Mammary epithelial cell (primary cell): ENCODE measurements at regions of chr6 and their contacts with region 1.

Region 1: GRCh38 chr6:29834564-29835436 is 7.2 kb downstream of the HLA-G start:
- DNase-seq: peak; percentile 17
- H3K4me3 ChIP-seq: no peak overlapping the region
- H3K27ac ChIP-seq: no peak overlapping the region
- H3K4me1 ChIP-seq: no peaks in the 10 kb centered on the region
- H3K27me3 ChIP-seq: no peaks in the 10 kb centered on the region
- CTCF ChIP-seq: peak; percentile 72 to 87

Region 2: GRCh38 chr6:29641430-29642148 is 193.2 kb before region 1 on chr6:
- CTCF ChIA-PET with region 1: no interaction called
- dilution Hi-C with region 1: loop called (anchors 5 kb)
- in situ Hi-C with region 1: loop called in 1 of 2 experiments (anchors 10 kb)
- intact Hi-C with region 1: no loop called
- DNase-seq: peak; percentile 27
- H3K4me3 ChIP-seq: no peak overlapping the region
- H3K27ac ChIP-seq: no peak overlapping the region
- H3K4me1 ChIP-seq: peaks cover 3% of the 10 kb centered on the region
- H3K27me3 ChIP-seq: no peaks in the 10 kb centered on the region
- CTCF ChIP-seq: no peak

Region 3: GRCh38 chr6:29649701-29650673 is 184.8 kb before region 1 on chr6:
- CTCF ChIA-PET with region 1: interaction called, 3 read pairs
- dilution Hi-C with region 1: no loop called
- in situ Hi-C with region 1: loop called in 1 of 2 experiments (anchors 10 kb)
- intact Hi-C with region 1: loop called (anchors 2 kb)
- DNase-seq: peak; percentile 96
- H3K4me3 ChIP-seq: peak overlapping the region; percentile 57 to 60 (median 59)
- H3K27ac ChIP-seq: peak overlapping the region; percentile 68
- H3K4me1 ChIP-seq: peaks cover 6% of the 10 kb centered on the region
- H3K27me3 ChIP-seq: no peaks in the 10 kb centered on the region
- CTCF ChIP-seq: peak; percentile 93 to 98

Region 4: GRCh38 chr6:29705389-29706231 is 129.2 kb before region 1 on chr6:
- CTCF ChIA-PET with region 1: no interaction called
- dilution Hi-C with region 1: no loop called
- in situ Hi-C with region 1: loop called in 1 of 2 experiments (anchors 10 kb)
- intact Hi-C with region 1: loop called (anchors 1 kb)
- DNase-seq: peak; percentile 32
- H3K4me3 ChIP-seq: no peak overlapping the region
- H3K27ac ChIP-seq: no peak overlapping the region
- H3K4me1 ChIP-seq: no peaks in the 10 kb centered on the region
- H3K27me3 ChIP-seq: no peaks in the 10 kb centered on the region
- CTCF ChIP-seq: peak; percentile 41 to 53

Region 5: GRCh38 chr6:29724937-29725869 is 109.6 kb before region 1 on chr6:
- CTCF ChIA-PET with region 1: no interaction called
- dilution Hi-C with region 1: loop called (anchors 5 kb)
- in situ Hi-C with region 1: no loop called
- intact Hi-C with region 1: no loop called
- DNase-seq: no peak
- H3K4me3 ChIP-seq: no peak overlapping the region
- H3K27ac ChIP-seq: no peak overlapping the region
- H3K4me1 ChIP-seq: no peaks in the 10 kb centered on the region
- H3K27me3 ChIP-seq: no peaks in the 10 kb centered on the region
- CTCF ChIP-seq: no peak

Region 6: GRCh38 chr6:29737707-29738630 is 96.8 kb before region 1 on chr6:
- CTCF ChIA-PET with region 1: no interaction called
- dilution Hi-C with region 1: no loop called
- in situ Hi-C with region 1: loop called (anchors 5 to 10 kb)
- intact Hi-C with region 1: loop called (anchors 1 kb)
- DNase-seq: peak; percentile 74
- H3K4me3 ChIP-seq: no peak overlapping the region
- H3K27ac ChIP-seq: no peak overlapping the region
- H3K4me1 ChIP-seq: peaks cover 14% of the 10 kb centered on the region
- H3K27me3 ChIP-seq: no peaks in the 10 kb centered on the region
- CTCF ChIP-seq: peak; percentile 76 to 88